SK-N-SH (cell line): ENCODE measurements at regions of chr17 and their contacts with region 1.

Region 1: GRCh38 chr17:4143563-4144421 is 795 bp downstream of the CYB5D2 start:
- DNase-seq: peak; percentile 88
- H3K4me3 ChIP-seq: peak overlapping the region; percentile 89 to 94
- H3K27ac ChIP-seq: peak overlapping the region; percentile 86 to 98
- H3K4me1 ChIP-seq: peaks cover 13 to 16% of the 10 kb centered on the region in 2 experiments; a peak in 3 of 4 replicates
- H3K27me3 ChIP-seq: no peaks in the 10 kb centered on the region
- CTCF ChIP-seq: no peak
- EP300 ChIP-seq: no peak
- RAD21 ChIP-seq: no peak

Region 2: DNA sequence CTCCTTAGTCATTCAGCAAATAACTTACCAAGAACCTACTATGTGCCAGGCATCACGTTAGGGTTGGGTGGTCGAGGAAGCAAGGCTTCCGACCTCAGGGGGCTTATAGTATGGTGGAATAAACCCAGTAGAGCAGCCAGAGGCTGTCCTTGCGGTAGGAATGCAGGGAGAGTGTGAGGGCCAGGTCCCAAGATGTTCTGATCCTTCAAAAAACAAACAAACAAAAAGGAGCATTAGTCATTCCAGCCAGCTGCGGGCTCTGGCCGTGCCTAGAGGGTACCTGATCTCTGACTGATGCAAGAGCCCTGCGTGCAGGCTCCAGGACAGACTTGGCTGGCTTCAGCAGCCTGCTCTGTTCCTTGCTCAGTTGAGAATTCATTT is 17.4 kb after region 1 on chr17:
- CTCF ChIA-PET with region 1: interaction called, 7 read pairs
- POLR2A ChIA-PET with region 1: interaction called, 14 read pairs
- DNase-seq: peak; percentile 48
- H3K4me3 ChIP-seq: no peak overlapping the region
- H3K27ac ChIP-seq: peak overlapping the region in 1 of 2 experiments; percentile 76; a peak in 2 of 4 replicates
- H3K4me1 ChIP-seq: peaks cover 0 to 26% of the 10 kb centered on the region in 2 experiments; a peak in 1 of 4 replicates
- H3K27me3 ChIP-seq: no peaks in the 10 kb centered on the region
- CTCF ChIP-seq: no peak
- EP300 ChIP-seq: no peak
- RAD21 ChIP-seq: no peak